Caco-2 (cell line): ENCODE measurements at regions of chr15 and their contacts with region 1.

Region 1: DNA sequence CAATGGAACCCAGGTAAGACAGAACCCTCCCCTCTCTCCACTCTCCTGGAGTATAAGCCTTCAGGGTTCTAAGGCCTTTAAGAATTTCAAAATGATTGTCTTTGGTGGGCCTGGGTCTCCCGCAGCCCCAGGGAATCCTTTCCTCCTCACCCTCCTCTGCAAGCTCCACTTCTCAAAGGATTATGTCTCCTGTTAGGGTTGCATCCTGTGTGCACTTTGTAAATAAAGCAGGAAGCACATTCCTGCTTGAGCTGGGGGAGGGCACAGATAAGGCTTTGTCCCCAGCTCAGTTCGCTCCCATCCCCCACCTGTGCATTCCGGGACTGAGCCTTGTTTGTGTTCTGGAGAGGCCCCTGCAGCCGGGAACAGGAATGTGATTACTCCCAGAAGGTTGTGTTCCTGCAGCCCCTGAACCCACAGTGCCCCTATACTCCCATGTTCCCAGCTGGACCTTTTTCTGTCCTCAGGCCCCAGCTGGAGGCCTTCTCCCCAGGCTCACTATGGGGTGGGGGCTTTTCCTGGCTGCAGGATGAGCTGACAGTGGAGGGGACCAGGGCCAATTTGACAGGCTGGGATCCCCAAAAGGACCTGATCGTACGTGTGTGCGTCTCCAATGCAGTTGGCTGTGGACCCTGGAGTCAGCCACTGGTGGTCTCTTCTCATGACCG is 9.5 kb downstream of the TYRO3 start:
- DNase-seq: peak; percentile 94 to 97
- H3K4me3 ChIP-seq: no peak overlapping the region
- H3K4me3 Mint-ChIP-seq: peak overlapping the region; percentile 67
- H3K27ac Mint-ChIP-seq: peak overlapping the region; percentile 89
- H3K4me1 ChIP-seq: peaks cover 53% of the 10 kb centered on the region
- H3K4me1 Mint-ChIP-seq: peaks cover 40% of the 10 kb centered on the region
- H3K27me3 ChIP-seq: no peaks in the 10 kb centered on the region
- H3K27me3 Mint-ChIP-seq: no peaks in the 10 kb centered on the region
- CTCF ChIP-seq: peak in 1 of 2 experiments; percentile 19

Region 2: DNA sequence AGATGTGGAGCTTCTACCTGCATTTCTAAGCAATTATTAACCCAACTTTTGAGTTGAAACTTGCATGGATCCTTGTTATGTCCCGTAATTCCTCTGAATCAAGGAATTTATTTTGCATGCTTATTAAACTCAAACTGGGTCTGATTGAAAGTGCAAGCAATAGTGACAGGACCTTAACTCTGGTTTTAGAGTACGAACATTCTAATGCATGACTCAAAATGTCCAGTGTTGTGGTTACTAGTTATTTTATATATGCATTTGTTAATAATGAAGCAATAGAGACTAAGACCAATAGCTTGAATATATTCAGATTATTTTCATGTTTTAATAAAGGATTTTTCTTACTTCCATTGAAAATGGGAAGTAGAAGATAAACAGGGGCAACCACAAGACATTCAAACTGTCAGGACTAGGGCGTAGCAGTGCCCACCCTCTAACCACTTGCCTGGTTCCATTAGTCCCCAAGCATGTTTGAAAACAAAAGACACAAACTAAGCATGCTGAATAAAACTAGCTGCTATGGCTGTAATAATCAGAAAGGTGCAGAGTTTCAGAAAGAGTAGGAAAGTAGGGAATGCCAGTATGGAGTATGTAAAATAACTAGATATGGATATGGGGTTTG is 264.2 kb before region 1 on chr15:
- CTCF ChIA-PET with region 1: no interaction called
- POLR2A ChIA-PET with region 1: no interaction called
- intact Hi-C with region 1: no loop called
- DNase-seq: no peak
- H3K4me3 ChIP-seq: no peak overlapping the region
- H3K4me3 Mint-ChIP-seq: no peak overlapping the region
- H3K27ac Mint-ChIP-seq: no peak overlapping the region
- H3K4me1 ChIP-seq: no peaks in the 10 kb centered on the region
- H3K4me1 Mint-ChIP-seq: no peaks in the 10 kb centered on the region
- H3K27me3 ChIP-seq: no peaks in the 10 kb centered on the region
- H3K27me3 Mint-ChIP-seq: no peaks in the 10 kb centered on the region
- CTCF ChIP-seq: no peak

Region 3: DNA sequence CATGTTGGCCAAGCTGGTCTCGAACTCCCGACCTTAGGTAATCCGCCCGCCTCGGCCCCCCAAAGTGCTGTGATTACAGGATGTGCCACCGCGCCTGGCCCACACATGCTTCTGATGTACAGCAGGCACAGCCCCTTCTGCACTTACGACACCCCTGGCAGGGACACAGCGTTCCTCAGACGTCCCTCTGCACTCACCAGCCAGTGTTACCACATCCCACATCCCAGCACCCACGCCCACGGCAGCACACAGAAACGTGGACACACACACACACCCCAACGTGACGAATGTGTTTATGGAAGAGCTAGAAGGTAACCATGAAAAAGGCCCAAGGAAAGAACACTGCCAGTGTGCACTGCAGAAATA is 23.9 kb before region 1 on chr15:
- CTCF ChIA-PET with region 1: interaction called, 4 read pairs
- POLR2A ChIA-PET with region 1: interaction called, 11 read pairs
- intact Hi-C with region 1: no loop called
- DNase-seq: no peak
- H3K4me3 ChIP-seq: peak overlapping the region; percentile 15; the same call in 1 of the 2 replicates
- H3K4me3 Mint-ChIP-seq: peak overlapping the region; percentile 86
- H3K27ac Mint-ChIP-seq: peak overlapping the region; percentile 88
- H3K4me1 ChIP-seq: peaks cover 19% of the 10 kb centered on the region
- H3K4me1 Mint-ChIP-seq: peaks cover 14% of the 10 kb centered on the region
- H3K27me3 ChIP-seq: no peaks in the 10 kb centered on the region
- H3K27me3 Mint-ChIP-seq: no peaks in the 10 kb centered on the region
- CTCF ChIP-seq: no peak

Region 4: DNA sequence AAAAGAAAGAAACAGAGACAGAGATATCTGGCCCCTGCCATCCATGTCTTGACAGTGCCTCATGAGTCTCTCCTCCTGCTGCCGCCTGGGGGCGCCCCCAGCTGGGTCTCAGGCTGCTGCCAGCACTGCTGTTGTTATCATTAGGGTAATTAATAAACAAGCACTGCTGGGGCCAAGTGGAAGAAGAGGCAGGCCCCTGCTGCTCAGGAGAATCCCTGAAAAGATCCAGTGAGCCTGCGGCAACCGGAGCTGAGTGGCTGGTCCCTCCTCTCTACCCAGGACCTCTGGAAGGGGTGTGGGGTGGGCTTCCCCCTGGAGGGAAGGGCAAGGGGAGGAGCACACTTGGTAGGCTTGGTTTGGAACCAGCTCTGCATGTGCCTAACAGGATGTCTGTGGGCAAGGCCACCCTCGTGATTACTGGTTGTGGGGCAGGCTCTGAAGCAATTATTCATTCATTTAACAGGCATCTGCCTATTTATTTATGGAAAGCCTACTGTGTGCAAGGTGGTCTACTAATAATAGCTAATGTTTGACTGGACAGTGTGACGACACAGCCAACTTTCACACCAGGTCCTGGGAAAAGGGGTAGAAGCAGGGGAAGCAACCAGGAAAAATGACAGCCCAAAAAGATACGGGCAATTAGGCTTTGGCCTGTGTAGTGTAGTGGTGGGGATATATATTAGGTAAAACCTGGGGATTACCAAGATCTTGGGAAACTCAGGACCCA is 10.6 kb before region 1 on chr15:
- CTCF ChIA-PET with region 1: interaction called, 10 read pairs
- POLR2A ChIA-PET with region 1: interaction called, 6 read pairs
- intact Hi-C with region 1: loop called (anchors 1 kb)
- DNase-seq: peak; percentile 73 to 79
- H3K4me3 ChIP-seq: peak overlapping the region; percentile 56
- H3K4me3 Mint-ChIP-seq: peak overlapping the region; percentile 94
- H3K27ac Mint-ChIP-seq: peak overlapping the region; percentile 91
- H3K4me1 ChIP-seq: peaks cover 38% of the 10 kb centered on the region
- H3K4me1 Mint-ChIP-seq: peaks cover 27% of the 10 kb centered on the region
- H3K27me3 ChIP-seq: no peaks in the 10 kb centered on the region
- H3K27me3 Mint-ChIP-seq: no peaks in the 10 kb centered on the region
- CTCF ChIP-seq: peak; percentile 82 to 92

Region 5: DNA sequence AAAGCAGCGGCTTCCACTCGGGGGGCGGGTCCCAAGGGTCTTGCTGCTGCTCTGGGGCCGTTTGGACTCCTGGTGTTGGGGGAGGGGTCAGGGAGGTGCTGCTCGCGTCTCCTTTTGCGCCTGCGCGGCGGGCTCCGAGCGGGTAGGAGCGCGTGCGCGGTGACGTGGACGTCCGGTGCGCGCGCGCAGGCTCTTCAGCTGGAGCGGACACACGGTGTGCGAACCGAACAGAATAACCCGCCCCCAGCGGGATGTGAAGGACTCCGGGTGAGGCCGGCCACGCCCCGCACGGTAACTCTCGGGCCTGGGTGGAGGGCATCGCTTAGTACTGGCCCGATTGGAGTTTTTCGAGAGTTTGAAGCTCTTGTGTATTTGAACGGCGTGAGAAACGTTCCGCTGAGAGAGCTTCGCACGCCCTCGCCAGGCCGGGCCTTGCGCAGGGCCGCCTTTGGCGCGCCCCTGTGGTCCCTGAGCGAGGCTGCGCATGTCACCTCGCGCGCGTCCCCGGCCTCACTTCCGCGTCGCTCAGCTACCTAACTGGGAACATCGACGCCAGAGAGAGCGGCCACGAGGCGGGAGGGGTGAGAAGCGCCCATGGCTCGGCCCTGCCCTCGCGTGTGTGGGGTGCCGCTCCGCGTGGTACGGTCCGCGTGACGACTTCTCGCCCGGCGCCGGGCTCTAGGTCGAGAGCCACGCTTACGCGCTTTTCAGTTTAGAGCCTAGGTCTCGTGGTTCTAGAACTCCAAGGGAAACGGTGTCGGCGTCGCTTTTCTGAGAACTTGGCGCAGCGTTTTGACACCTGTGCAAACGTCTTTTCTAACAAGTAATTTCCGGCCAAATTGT is 92.0 kb after region 1 on chr15 and contains the start of gene MGA:
- CTCF ChIA-PET with region 1: interaction called, 6 read pairs
- POLR2A ChIA-PET with region 1: no interaction called
- intact Hi-C with region 1: loop called (anchors 5 kb)
- DNase-seq: peak; percentile 95 to 96
- H3K4me3 ChIP-seq: peak within 1 kb of the TSS; percentile 87
- H3K4me3 Mint-ChIP-seq: peak within 1 kb of the TSS; percentile 92
- H3K27ac Mint-ChIP-seq: peak within 1 kb of the TSS; percentile 88
- H3K4me1 ChIP-seq: peaks cover 18% of the 10 kb centered on the region
- H3K4me1 Mint-ChIP-seq: peaks cover 22% of the 10 kb centered on the region
- H3K27me3 ChIP-seq: no peaks in the 10 kb centered on the region
- H3K27me3 Mint-ChIP-seq: no peaks in the 10 kb centered on the region
- CTCF ChIP-seq: peak in 1 of 2 experiments; percentile 23
- total RNA-seq, gene MGA: 59.6 and 60.0 TPM in 2 replicates